Activated CD8-positive, alpha-beta T cell treated with anti-CD3 and anti-CD28 coated beads for 36 hours (primary cell): ENCODE measurements at regions of chr1 and their contacts with region 1.

Region 1: GRCh38 chr1:173946380-173946921 is 29.3 kb upstream of the SERPINC1 start:
- DNase-seq: no peak
- ATAC-seq: no peak
- H3K4me3 Mint-ChIP-seq: no peak overlapping the region
- H3K27ac Mint-ChIP-seq: peak overlapping the region; percentile 58
- H3K4me1 Mint-ChIP-seq: peaks cover 2% of the 10 kb centered on the region
- H3K27me3 Mint-ChIP-seq: no peaks in the 10 kb centered on the region
- CTCF ChIP-seq: no peak

Region 2: DNA sequence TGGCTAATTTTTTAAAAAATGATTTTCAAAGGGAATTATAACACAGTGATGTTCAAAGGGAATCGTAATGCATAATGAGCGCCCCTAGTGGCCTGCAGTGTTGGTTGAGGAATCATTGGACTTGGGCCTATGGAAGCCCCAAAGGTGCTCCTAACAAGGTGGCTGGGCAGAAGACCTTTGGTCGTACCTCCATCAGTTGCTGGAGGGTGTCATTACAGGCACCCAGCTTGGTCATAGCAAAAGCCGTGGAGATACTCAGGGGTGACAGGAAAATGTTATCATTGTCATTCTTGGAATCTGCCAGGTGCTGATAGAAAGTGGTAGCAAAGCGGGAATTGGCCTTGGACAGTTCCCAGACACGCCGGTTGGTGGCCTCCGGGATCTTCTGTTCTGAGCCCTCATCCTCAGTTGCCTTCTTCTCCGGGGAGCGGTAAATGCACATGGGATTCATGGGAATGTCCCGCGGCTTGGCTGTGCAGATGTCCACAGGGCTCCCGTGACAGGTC is 32.0 kb before region 1 on chr1:
- CTCF ChIA-PET with region 1: no interaction called
- POLR2A ChIA-PET with region 1: no interaction called
- intact Hi-C with region 1: no loop called
- DNase-seq: peak; percentile 54
- ATAC-seq: no peak
- H3K4me3 Mint-ChIP-seq: no peak overlapping the region
- H3K27ac Mint-ChIP-seq: no peak overlapping the region
- H3K4me1 Mint-ChIP-seq: no peaks in the 10 kb centered on the region
- H3K27me3 Mint-ChIP-seq: no peaks in the 10 kb centered on the region
- CTCF ChIP-seq: peak; percentile 62

Region 3: GRCh38 chr1:174005032-174005431 is 58.6 kb after region 1 on chr1:
- CTCF ChIA-PET with region 1: no interaction called
- POLR2A ChIA-PET with region 1: no interaction called
- intact Hi-C with region 1: loop called (anchors 10 kb)
- DNase-seq: no peak
- ATAC-seq: no peak
- H3K4me3 Mint-ChIP-seq: no peak overlapping the region
- H3K27ac Mint-ChIP-seq: no peak overlapping the region
- H3K4me1 Mint-ChIP-seq: peaks cover 47% of the 10 kb centered on the region
- H3K27me3 Mint-ChIP-seq: no peaks in the 10 kb centered on the region
- CTCF ChIP-seq: no peak